BJ (cell line): ENCODE measurements at regions of chr3 and their contacts with region 1.

Region 1: GRCh38 chr3:86774082-86774691 is 216.8 kb downstream of the VGLL3 start:
- DNase-seq: no peak
- H3K4me3 ChIP-seq: no peak overlapping the region
- H3K27me3 ChIP-seq: no peaks in the 10 kb centered on the region
- CTCF ChIP-seq: peak; percentile 42; the same call in 1 of the 2 replicates

Region 2: GRCh38 chr3:86645756-86646155 is 128.4 kb before region 1 on chr3:
- CTCF ChIA-PET with region 1: no interaction called
- POLR2A ChIA-PET with region 1: no interaction called
- DNase-seq: no peak
- H3K4me3 ChIP-seq: no peak overlapping the region
- H3K27me3 ChIP-seq: no peaks in the 10 kb centered on the region
- CTCF ChIP-seq: no peak

Region 3: DNA sequence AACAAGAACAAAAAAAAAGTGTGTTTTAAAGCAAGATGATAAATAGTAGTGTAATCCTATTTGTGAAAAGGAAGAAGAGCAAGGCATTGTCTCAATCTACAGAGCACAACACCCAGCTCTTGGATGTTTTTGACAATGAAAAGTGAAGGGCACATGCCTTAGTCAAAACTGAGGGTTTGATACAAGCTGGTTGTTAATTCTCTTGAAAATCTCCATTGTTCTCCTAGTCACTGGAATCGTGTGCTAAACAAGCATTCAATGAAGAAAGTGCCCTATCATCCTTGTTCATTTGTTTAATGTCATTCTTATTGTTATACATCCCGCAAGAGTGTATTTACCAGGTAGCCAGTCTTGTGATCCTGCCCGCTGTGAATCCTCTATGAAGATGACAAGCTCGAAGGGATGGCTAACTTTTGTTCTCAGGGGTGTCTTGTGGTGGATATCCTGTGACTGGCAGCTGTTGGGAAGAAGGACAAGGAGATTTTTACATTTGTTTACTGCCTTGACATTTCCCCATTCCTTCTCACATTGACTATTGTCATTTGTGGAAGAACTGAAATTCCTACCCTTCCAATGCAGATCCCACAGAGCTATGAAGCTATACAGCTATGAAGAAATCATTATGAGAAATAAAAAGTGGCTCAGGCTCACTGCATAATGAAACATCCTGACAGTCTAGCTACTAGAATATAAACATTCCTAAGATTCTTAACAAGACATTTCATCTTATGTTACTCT is 40.9 kb after region 1 on chr3:
- CTCF ChIA-PET with region 1: no interaction called
- POLR2A ChIA-PET with region 1: no interaction called
- DNase-seq: no peak
- H3K4me3 ChIP-seq: no peak overlapping the region
- H3K27me3 ChIP-seq: no peaks in the 10 kb centered on the region
- CTCF ChIP-seq: no peak

Region 4: GRCh38 chr3:86880066-86880465 is 105.9 kb after region 1 on chr3:
- CTCF ChIA-PET with region 1: no interaction called
- POLR2A ChIA-PET with region 1: no interaction called
- DNase-seq: no peak
- H3K4me3 ChIP-seq: no peak overlapping the region
- H3K27me3 ChIP-seq: no peaks in the 10 kb centered on the region
- CTCF ChIP-seq: no peak

Region 5: GRCh38 chr3:87088993-87089841 is 315.0 kb after region 1 on chr3:
- CTCF ChIA-PET with region 1: interaction called, 62 read pairs
- POLR2A ChIA-PET with region 1: interaction called, 3 read pairs
- DNase-seq: peak; percentile 60
- H3K4me3 ChIP-seq: peak overlapping the region; percentile 37
- H3K27me3 ChIP-seq: no peaks in the 10 kb centered on the region
- CTCF ChIP-seq: no peak

Region 6: GRCh38 chr3:87145553-87145952 is 371.4 kb after region 1 on chr3:
- CTCF ChIA-PET with region 1: interaction called, 12 read pairs
- POLR2A ChIA-PET with region 1: no interaction called
- DNase-seq: no peak
- H3K4me3 ChIP-seq: no peak overlapping the region
- H3K27me3 ChIP-seq: no peaks in the 10 kb centered on the region; the same call in 1 of the 2 replicates
- CTCF ChIP-seq: peak; percentile 42

Region 7: GRCh38 chr3:87167628-87168456 is 393.7 kb after region 1 on chr3:
- CTCF ChIA-PET with region 1: interaction called, 14 read pairs
- POLR2A ChIA-PET with region 1: no interaction called
- DNase-seq: peak; percentile 15
- H3K4me3 ChIP-seq: peak overlapping the region; percentile 34
- H3K27me3 ChIP-seq: no peaks in the 10 kb centered on the region
- CTCF ChIP-seq: peak; percentile 59